Dorsolateral prefrontal cortex (tissue), 120 donors: ENCODE measurements at regions of chr9 and their contacts with region 1.

Region 1: DNA sequence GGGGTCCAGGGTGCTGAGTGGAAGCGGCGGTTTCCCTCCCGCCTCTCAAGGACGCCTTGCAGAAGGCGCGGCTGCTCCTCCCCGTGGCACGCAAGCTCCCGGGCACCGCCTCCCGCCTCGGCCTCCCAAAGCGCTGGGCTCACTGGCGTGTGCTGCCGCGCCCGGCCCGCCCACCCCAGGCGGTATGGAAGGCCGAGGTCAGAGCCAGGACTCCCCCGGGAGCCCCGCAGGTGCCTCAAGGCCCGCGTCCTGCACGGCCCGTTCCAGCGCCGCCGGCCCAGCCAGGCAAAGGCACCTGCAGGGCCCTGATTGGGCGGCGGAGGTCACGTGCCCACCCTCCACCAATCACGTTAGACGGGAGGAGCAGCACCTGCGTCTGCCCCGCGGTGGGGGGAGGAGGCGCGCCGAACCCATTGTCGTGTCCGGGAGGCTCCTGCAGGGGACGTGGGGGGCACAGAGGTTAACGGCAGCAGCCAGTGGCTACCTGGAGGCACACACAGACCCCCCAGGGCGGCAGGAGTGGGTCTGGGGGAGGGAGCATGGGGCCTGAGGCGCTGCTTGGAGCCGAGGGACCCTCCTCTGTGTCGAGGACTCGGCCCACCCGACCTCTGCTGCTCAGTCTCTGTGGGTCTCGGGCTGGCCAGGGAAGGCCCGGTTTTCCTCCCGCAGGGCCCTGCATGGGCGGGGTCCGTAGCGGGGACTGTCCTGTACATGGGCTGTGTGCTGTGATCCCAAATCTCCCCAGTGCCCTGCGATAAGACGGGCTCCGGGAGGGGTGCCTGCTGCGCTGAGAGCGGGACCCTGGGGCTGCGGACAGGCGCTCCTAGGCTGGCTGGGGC is 2.0 kb upstream of the LCN12 start:
- DNase-seq: peak; percentile 96 to 100 (median 98)
- H3K4me3 ChIP-seq: peak overlapping the region; percentile 63 to 97 (median 81)
- H3K27ac ChIP-seq: peak overlapping the region; percentile 80 to 99 (median 96)
- H3K27me3 ChIP-seq: no peaks in the 10 kb centered on the region
- CTCF ChIP-seq: peak in 41 of 56 donors; percentile 4 to 59 (median 34)

Region 2: DNA sequence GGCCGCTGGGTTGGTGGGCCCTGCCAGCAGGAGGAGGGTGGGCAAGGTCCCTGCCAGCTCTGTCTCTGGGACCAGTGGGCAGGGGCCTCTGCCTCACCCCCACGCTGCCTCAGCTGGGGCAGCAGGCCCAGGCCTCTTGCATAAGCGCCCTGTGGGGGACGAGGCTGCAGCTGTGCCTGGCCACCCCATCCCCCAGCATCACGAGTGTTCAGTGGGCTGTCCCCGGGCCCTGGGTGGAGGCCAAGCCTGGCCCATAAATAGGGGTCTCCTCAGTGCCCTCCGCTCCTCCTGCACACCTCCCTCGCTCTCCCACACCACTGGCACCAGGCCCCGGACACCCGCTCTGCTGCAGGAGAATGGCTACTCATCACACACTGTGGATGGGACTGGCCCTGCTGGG is 27.2 kb after region 1 on chr9 and contains the start of gene PTGDS:
- intact Hi-C with region 1: loop called in 1 of 2 experiments (anchors 1 kb)
- DNase-seq: peak; percentile 62 to 97 (median 96)
- H3K4me3 ChIP-seq: peak within 1 kb of the TSS; percentile 44 to 94 (median 81)
- H3K27ac ChIP-seq: peak within 1 kb of the TSS; percentile 90 to 100 (median 98)
- H3K27me3 ChIP-seq: no peaks in the 10 kb centered on the region
- CTCF ChIP-seq: peak in 15 of 56 donors; percentile 6 to 47 (median 18)
- total RNA-seq, gene PTGDS: 1,122 to 4,894 (median 2,197) TPM